CD4-positive, alpha-beta T cell (primary cell): ENCODE measurements at regions of chr1 and their contacts with region 1.

Region 1: DNA sequence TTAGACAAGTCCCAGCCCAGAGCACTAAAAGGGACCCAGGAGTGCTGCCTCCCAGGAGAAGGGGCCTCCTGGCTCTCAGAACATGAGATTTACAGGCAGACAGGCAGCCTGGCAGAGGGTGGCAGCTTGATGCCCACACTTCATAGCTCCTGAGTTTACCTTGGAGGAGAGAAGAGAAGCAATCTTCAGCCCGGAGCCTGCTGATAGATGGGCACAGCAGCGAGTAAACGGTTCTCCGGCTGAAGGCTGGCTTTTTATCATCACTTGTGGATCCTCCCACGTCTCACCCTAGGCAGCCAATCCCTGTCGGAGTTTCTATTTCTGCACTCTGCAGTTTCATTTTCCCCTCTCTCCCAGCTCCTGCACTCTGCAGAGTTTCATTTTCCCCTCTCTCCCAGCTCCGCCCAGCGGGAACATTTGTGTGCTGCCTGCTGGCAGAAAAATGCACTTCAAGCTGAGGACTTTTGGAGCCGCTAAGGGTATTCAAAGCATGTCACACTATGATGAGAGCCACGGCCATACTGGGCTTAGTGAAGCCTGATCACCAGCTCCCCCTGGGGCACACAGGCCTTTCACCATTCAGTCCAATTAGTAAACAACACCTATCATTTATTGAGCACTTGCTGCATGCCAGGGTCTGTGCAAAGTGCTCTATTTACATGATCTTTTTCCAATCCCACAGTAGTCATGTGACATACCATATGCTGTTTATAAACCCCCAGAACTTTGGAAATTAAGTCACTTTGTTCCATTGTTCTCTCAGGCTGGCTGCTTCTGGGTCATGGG is at the start of gene IFI6:
- DNase-seq: peak; percentile 56 to 92 (median 68)
- ATAC-seq: peak; percentile 90
- H3K4me3 ChIP-seq: peak within 1 kb of the TSS; percentile 69
- H3K4me3 Mint-ChIP-seq: peak within 1 kb of the TSS; percentile 92
- H3K27ac ChIP-seq: peak within 1 kb of the TSS; percentile 85 to 91
- H3K27ac Mint-ChIP-seq: peak within 1 kb of the TSS; percentile 85
- H3K4me1 ChIP-seq: peaks cover 40% of the 10 kb centered on the region
- H3K4me1 Mint-ChIP-seq: peaks cover 39% of the 10 kb centered on the region
- H3K27me3 ChIP-seq: no peaks in the 10 kb centered on the region
- H3K27me3 Mint-ChIP-seq: no peaks in the 10 kb centered on the region
- CTCF ChIP-seq: peak; percentile 52
- total RNA-seq, gene IFI6: 33.6 to 36.2 TPM

Region 2: DNA sequence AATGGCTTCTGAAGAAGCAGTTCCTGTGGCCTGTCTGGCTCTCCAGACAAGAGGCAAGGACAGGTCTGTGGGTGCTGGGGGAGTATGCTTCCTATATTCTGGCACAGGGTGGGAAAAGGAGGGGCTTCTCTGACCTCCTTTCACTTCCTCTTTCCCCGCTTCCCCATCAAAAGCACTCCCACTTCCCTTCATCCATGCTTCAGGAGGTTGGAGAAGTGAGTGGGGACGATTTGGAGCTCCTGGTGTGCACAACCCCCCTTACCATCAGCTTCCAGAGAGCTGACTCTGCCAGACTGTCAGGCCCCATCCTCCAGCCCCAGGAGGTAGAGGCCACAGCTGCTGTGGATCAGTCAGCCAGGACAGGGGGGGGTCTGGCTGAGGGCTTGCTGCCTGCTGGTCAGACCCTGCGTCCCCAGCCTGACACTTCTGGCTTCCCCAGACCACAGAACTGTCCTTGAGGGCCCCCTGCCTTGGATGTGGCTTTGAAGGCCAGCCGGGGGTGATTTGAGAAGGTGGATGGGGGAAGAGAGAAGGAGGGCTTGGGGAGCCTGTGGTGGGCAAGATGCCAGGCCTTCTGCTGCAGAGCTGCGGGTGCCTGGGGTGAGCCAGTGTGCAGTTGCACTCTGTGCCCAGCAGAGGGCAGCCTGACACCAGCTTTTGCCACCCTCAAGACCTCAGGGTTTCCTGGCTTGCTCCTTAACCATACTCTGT is 371.7 kb before region 1 on chr1:
- CTCF ChIA-PET with region 1: interaction called, 4 read pairs
- POLR2A ChIA-PET with region 1: no interaction called
- intact Hi-C with region 1: loop called in 1 of 2 experiments (anchors 5 kb)
- DNase-seq: peak; percentile 61 to 91 (median 74)
- ATAC-seq: peak; percentile 96
- H3K4me3 ChIP-seq: no peak overlapping the region
- H3K4me3 Mint-ChIP-seq: no peak overlapping the region
- H3K27ac ChIP-seq: no peak overlapping the region
- H3K27ac Mint-ChIP-seq: no peak overlapping the region
- H3K4me1 ChIP-seq: peaks cover 8% of the 10 kb centered on the region
- H3K4me1 Mint-ChIP-seq: peaks cover 5% of the 10 kb centered on the region
- H3K27me3 ChIP-seq: no peaks in the 10 kb centered on the region
- H3K27me3 Mint-ChIP-seq: no peaks in the 10 kb centered on the region
- CTCF ChIP-seq: peak; percentile 96

Region 3: GRCh38 chr1:27416387-27417111 is 255.6 kb before region 1 on chr1:
- CTCF ChIA-PET with region 1: interaction called, 3 read pairs
- POLR2A ChIA-PET with region 1: no interaction called
- intact Hi-C with region 1: loop called in 1 of 2 experiments (anchors 5 kb)
- DNase-seq: peak in 10 of 14 experiments; percentile 28 to 81 (median 49)
- ATAC-seq: peak; percentile 73
- H3K4me3 ChIP-seq: no peak overlapping the region
- H3K4me3 Mint-ChIP-seq: no peak overlapping the region
- H3K27ac ChIP-seq: no peak overlapping the region
- H3K27ac Mint-ChIP-seq: peak overlapping the region; percentile 54
- H3K4me1 ChIP-seq: peaks cover 18% of the 10 kb centered on the region
- H3K4me1 Mint-ChIP-seq: peaks cover 46% of the 10 kb centered on the region
- H3K27me3 ChIP-seq: no peaks in the 10 kb centered on the region
- H3K27me3 Mint-ChIP-seq: no peaks in the 10 kb centered on the region
- CTCF ChIP-seq: peak; percentile 60

Region 4: DNA sequence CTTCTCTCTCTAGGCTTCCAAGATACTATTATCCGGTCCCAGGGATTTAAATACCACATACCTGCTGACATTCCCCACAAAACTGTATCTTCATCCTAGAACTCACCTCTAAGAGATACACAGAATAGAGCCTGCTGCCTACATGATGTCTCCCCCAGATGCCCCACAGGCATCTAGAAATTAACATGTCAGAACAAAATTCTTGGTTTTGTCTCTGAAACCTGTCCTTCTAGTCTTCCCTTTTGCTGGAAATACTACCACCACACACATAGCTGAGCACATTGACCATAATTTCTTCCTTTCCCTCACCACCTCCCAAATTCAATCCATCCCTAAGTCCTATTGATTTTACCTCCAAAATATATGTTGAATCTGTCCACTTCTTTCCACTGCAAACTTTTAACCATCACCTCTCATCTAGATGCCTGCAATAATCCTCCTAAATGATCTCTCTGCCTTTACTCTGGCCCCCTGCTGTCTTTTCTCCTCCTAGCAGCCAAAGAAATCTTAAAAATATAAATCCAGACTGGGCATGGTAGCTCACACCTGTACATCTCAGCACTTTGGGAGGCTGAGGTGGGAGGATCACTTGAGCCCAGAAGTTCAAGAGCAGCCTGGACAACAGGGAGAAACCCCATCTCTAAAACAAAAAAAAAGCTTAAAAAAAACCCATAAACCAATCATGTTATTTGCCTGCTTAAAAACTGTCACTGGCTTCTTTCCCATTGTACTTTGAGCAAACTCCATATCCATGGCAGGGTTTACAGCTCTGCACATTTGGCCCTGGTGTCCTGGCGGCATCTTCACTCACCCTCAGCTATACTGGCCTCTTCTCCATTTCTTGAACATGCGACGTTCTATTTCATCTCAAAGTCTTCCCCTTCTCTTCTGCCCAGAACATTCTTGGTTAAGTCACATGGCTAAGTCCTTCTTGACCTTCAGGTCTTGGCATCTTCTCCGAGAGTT is 47.4 kb after region 1 on chr1:
- CTCF ChIA-PET with region 1: interaction called, 44 read pairs
- POLR2A ChIA-PET with region 1: no interaction called
- intact Hi-C with region 1: loop called (anchors 1 to 2 kb)
- DNase-seq: peak in 5 of 14 experiments; percentile 3 to 37 (median 13)
- ATAC-seq: peak; percentile 56
- H3K4me3 ChIP-seq: no peak overlapping the region
- H3K4me3 Mint-ChIP-seq: no peak overlapping the region
- H3K27ac ChIP-seq: no peak overlapping the region
- H3K27ac Mint-ChIP-seq: no peak overlapping the region
- H3K4me1 ChIP-seq: no peaks in the 10 kb centered on the region
- H3K4me1 Mint-ChIP-seq: no peaks in the 10 kb centered on the region
- H3K27me3 ChIP-seq: peaks cover 0 to 3% of the 10 kb centered on the region in 2 experiments
- H3K27me3 Mint-ChIP-seq: peaks cover 16% of the 10 kb centered on the region
- CTCF ChIP-seq: peak; percentile 44

Region 5: DNA sequence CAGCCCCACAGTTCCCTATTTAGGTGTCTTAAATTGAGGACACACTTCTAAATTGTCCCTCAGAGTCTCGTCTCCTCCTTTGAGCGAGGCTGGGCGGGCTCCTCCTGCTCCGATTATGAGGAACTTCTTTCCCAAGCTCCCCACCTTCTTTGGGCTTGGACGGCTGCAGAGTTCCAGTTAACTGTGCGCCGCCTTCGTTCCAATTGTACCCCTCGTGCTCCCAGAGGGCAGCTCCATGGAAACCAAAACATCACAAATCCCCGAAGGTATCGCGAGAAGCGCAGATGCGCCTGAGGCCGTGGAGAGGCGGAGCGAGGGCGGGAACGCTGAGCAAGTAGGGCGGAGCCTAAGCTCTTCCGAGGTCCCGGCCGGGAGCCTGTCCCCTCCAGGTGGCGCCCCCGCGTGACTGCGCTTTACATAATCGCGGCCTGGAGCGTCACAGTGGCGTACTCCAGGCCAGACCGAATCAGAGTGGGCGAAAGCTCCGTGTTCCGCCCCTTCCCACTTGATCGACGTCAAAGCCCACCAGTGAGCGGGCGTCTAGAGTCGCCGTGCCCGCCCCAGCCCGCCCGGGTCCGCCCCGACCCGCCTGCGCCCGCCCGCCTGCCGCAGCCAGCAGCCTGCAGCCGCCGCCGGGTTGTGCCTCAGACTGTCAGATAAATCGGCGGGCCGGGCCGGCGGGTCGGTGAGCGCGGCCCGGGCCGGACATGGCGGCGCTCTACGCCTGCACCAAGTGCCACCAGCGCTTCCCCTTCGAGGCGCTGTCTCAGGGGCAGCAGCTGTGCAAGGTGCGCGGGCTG is 53.4 kb after region 1 on chr1 and contains the start of gene FAM76A:
- CTCF ChIA-PET with region 1: interaction called, 44 read pairs
- POLR2A ChIA-PET with region 1: interaction called, 27 read pairs
- intact Hi-C with region 1: loop called (anchors 2 kb)
- DNase-seq: peak; percentile 99 to 100 (median 99)
- ATAC-seq: peak; percentile 92
- H3K4me3 ChIP-seq: peak within 1 kb of the TSS; percentile 74
- H3K4me3 Mint-ChIP-seq: peak within 1 kb of the TSS; percentile 85
- H3K27ac ChIP-seq: peak within 1 kb of the TSS; percentile 82 to 85
- H3K27ac Mint-ChIP-seq: peak within 1 kb of the TSS; percentile 89
- H3K4me1 ChIP-seq: peaks cover 19% of the 10 kb centered on the region
- H3K4me1 Mint-ChIP-seq: peaks cover 24% of the 10 kb centered on the region
- H3K27me3 ChIP-seq: no peaks in the 10 kb centered on the region
- H3K27me3 Mint-ChIP-seq: no peaks in the 10 kb centered on the region
- CTCF ChIP-seq: peak; percentile 60
- total RNA-seq, gene FAM76A: 26.0 to 28.7 TPM

Region 6: DNA sequence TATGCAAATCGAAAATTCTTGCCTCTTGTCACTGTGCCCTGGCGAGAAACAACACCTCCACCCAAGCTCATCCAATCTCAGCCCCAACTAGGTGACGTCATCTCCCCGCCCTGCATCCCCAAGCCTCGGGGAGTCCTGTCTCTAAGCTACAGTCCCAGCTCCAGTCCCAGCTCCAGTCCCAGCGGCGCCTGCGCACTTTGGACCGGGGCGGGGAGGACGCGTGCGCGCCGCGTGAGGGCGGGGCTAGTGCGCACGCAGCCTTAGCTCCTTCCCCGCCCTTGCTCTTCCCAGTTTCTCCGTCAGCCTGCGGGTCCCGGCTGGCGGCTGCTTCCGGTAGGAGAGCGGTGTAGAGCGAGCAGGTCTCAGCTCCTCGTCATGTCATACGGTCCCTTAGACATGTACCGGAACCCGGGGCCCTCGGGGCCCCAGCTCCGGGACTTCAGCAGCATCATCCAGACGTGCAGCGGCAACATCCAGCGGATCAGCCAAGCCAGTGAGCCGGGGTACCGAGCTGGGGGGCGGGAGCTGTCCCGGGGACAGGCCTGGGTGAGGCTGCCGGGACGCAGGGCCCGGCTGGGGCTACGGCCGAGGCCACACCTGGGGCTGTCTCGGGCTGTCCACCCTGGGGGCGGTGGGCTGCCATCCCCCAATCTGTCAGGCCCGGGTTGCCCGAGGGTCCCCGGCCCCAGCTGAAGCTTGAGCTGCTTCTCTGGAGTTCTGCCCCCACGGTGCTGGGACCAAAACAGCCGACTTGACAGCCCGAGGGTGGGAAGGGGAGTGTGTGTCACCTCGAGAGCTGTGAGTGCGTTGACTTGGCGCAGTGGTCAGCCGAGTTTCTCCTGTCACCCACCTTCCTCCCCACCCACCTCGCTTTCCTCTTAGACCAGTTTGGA is 101.0 kb after region 1 on chr1 and contains the start of gene STX12:
- CTCF ChIA-PET with region 1: interaction called, 13 read pairs
- POLR2A ChIA-PET with region 1: interaction called, 8 read pairs
- intact Hi-C with region 1: loop called (anchors 2 to 5 kb)
- DNase-seq: peak; percentile 95 to 100 (median 98)
- ATAC-seq: peak; percentile 91
- H3K4me3 ChIP-seq: peak within 1 kb of the TSS; percentile 72
- H3K4me3 Mint-ChIP-seq: peak within 1 kb of the TSS; percentile 97
- H3K27ac ChIP-seq: peak within 1 kb of the TSS; percentile 86 to 91
- H3K27ac Mint-ChIP-seq: peak within 1 kb of the TSS; percentile 93
- H3K4me1 ChIP-seq: peaks cover 22% of the 10 kb centered on the region
- H3K4me1 Mint-ChIP-seq: peaks cover 30% of the 10 kb centered on the region
- H3K27me3 ChIP-seq: no peaks in the 10 kb centered on the region
- H3K27me3 Mint-ChIP-seq: no peaks in the 10 kb centered on the region
- CTCF ChIP-seq: no peak
- total RNA-seq, gene STX12: 20.3 to 22.7 TPM

Region 7: GRCh38 chr1:28021064-28021463 is 348.9 kb after region 1 on chr1:
- CTCF ChIA-PET with region 1: no interaction called
- POLR2A ChIA-PET with region 1: no interaction called
- intact Hi-C with region 1: no loop called
- DNase-seq: no peak
- ATAC-seq: no peak
- H3K4me3 ChIP-seq: no peak overlapping the region
- H3K4me3 Mint-ChIP-seq: no peak overlapping the region
- H3K27ac ChIP-seq: no peak overlapping the region
- H3K27ac Mint-ChIP-seq: peak overlapping the region; percentile 38
- H3K4me1 ChIP-seq: no peaks in the 10 kb centered on the region
- H3K4me1 Mint-ChIP-seq: peaks cover 4% of the 10 kb centered on the region
- H3K27me3 ChIP-seq: no peaks in the 10 kb centered on the region
- H3K27me3 Mint-ChIP-seq: no peaks in the 10 kb centered on the region
- CTCF ChIP-seq: no peak

Region 8: DNA sequence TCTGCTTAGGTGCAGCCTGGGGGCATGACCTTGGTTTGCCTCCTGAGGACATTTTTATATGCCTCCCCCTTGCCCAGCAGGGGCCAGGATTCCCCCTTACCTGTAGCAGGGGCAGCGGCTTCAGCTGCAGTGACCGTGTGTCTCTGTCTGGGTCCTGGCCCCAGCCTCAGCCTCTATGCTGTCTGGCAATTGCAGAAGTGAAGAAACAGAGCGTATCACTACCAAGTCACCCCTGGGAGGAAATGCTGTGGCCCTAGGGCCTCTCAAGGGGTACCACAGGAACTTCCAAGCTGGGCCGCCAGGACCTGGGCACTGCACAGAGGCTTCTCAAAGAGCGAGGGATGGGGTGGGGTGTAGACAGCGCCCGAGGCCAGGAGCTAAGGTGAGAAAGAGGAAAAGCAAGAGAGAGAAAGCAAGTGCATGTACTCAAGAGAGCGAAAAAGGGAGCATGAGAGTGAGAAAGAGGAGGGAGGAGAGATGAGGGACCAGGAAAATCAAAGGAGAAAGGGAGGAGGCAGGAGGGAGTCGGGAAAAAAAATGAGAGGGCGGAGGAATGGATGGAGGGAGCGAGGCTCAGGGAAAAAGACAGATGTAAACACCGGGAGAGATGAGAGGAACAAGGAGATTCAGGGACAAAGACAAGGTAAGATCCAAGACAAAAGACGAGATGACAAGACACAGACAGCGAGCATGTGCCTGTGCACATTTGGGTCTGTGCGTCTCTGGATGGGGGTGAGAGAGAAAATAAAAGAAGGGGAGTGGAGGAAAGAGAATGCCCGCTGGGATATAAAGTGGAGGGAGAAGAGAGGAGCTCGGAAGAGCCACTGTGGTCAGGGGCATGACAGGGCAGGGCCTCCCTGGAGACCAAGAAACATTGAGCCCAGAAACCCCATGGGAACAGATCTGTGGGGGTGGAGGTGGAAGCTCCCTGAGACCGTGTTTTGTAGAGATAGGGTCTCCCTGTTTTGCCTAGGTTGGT is 504.6 kb after region 1 on chr1 and contains the start of gene PTAFR:
- CTCF ChIA-PET with region 1: no interaction called
- POLR2A ChIA-PET with region 1: no interaction called
- intact Hi-C with region 1: no loop called
- DNase-seq: peak in 2 of 14 experiments; percentile 40 to 53
- ATAC-seq: no peak
- H3K4me3 ChIP-seq: peak within 1 kb of the TSS; percentile 20
- H3K4me3 Mint-ChIP-seq: no peak within 1 kb of the TSS
- H3K27ac ChIP-seq: no peak within 1 kb of the TSS
- H3K27ac Mint-ChIP-seq: no peak within 1 kb of the TSS
- H3K4me1 ChIP-seq: peaks cover 29% of the 10 kb centered on the region
- H3K4me1 Mint-ChIP-seq: peaks cover 25% of the 10 kb centered on the region
- H3K27me3 ChIP-seq: no peaks in the 10 kb centered on the region
- H3K27me3 Mint-ChIP-seq: no peaks in the 10 kb centered on the region
- CTCF ChIP-seq: no peak
- total RNA-seq, gene PTAFR: 0.47 to 0.53 TPM